ENCODE measurements at regions of chr19 and their contacts with region 1.

Region 1: GRCh38 chr19:43668406-43669158 is 1.4 kb downstream of the PLAUR start:
- H3K4me3 ChIP-seq: peak overlapping the region; percentile 19
- H3K27ac ChIP-seq: peak overlapping the region; percentile 56
- H3K4me1 ChIP-seq: peaks cover 42% of the 10 kb centered on the region
- CTCF ChIP-seq: no peak

Region 2: DNA sequence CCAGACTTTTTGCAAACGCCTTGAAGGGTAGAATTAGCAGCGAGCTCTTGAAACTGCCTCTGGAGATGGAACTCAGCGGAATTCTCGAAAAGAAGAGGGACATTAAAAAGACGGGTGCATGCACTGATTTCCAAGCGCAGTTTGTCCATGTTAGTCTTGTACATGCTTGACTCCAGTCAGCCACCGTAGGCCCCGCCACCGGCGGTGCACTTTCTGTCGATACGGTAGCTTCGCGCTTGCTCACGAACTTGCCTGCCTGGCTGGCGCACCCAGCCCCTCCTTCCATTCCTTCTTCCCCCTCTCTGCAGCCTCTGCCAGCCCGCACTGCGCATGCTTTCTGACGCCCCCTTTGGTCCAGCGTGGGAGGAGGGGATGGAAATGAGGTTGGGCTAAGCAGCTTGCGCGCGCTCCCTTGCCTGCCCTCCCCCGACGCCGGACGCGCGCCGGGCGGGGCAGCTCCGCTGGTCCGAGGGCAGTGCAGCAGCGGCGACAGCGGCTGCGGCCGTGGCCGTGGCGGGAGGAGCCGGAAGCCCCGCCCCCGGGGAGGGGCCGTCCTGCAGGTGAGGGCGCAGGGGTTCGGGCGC is 135.5 kb before region 1 on chr19 and contains the start of gene ZNF575:
- CTCF ChIA-PET with region 1: interaction called, 5 read pairs
- POLR2A ChIA-PET with region 1: interaction called, 25 read pairs
- H3K4me3 ChIP-seq: peak within 1 kb of the TSS; percentile 9
- H3K27ac ChIP-seq: peak within 1 kb of the TSS; percentile 73
- H3K4me1 ChIP-seq: peaks cover 26% of the 10 kb centered on the region
- CTCF ChIP-seq: no peak; the same call in 1 of the 2 replicates

Region 3: DNA sequence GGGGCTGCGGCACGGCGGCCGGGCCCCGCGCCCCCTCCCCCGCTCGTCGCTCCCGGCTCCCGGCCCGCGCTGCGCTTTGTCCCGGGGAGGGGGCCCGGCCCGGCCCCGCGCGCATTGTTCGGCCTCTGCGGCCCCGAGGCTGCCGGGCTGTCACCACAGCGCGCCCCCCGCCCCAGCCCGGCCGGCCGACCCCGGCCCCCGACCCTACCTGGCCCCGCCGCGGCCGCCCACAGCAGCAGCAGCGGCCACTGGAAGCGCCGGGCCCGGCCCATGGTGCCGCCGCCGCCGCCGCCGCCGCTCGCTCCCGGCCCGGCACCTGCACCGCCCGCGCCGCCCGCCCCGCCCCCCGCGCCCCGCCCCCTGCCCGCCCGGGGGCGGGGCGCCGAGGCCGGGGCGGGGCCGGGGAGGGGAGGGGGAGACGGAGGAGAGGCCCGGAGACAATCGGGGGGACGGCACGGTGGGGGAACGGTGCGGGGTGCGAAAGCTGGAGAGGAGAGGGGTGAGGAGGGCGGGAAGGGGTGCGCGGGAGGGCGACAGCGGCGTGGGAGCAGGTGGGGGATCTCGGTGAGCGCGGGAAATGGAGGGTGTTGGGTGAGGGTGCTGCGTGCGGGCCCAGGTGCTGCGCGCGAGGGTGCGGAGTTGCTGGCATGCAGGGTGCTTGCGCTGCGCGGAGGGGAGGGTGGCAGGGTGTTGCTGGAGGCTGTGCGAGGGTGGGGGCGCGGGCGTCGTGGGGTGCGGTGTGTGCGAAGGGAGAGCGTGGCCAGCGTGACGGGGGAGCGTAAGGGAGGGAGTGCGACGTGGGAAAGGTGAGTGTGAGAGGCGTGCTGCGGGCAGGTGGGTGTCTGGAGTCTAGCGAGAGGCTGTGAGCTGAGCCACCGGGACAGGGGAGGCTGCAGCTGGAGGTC is 28.8 kb before region 1 on chr19 and contains the start of gene CADM4:
- CTCF ChIA-PET with region 1: interaction called, 3 read pairs
- POLR2A ChIA-PET with region 1: interaction called, 13 read pairs
- H3K4me3 ChIP-seq: peak within 1 kb of the TSS; percentile 48
- H3K27ac ChIP-seq: peak within 1 kb of the TSS; percentile 49; the same call in 1 of the 2 replicates
- H3K4me1 ChIP-seq: peaks cover 21% of the 10 kb centered on the region
- CTCF ChIP-seq: peak; percentile 61

Region 4: DNA sequence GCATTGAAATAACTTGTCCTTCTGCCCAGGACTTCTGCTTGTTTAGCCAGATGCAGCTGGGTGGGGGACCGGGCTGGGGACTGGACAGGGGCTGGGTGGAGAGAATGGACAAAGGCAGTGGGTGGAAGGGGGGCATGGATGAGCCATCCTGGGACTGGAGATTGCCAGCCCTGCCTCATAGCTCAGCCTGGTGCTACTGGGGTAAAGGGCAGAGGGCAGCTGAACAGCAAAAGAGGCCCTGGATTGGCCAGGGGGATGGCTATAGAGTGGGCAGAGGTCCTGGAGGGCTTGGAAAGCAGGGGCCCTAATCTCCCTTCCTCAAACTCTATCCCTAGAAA is 19.0 kb after region 1 on chr19:
- CTCF ChIA-PET with region 1: interaction called, 14 read pairs
- POLR2A ChIA-PET with region 1: interaction called, 64 read pairs
- H3K4me3 ChIP-seq: no peak overlapping the region
- H3K27ac ChIP-seq: peak overlapping the region; percentile 45; the same call in 1 of the 2 replicates
- H3K4me1 ChIP-seq: peaks cover 13% of the 10 kb centered on the region
- CTCF ChIP-seq: no peak

Region 5: GRCh38 chr19:43747557-43748204 is 79.1 kb after region 1 on chr19:
- CTCF ChIA-PET with region 1: interaction called, 10 read pairs
- POLR2A ChIA-PET with region 1: interaction called, 63 read pairs
- H3K4me3 ChIP-seq: no peak overlapping the region
- H3K27ac ChIP-seq: 0 out of 2 replicates have a peak overlapping the region, but pooled peaks have one; percentile 17
- H3K4me1 ChIP-seq: no peaks in the 10 kb centered on the region; the same call in 1 of the 2 replicates
- CTCF ChIP-seq: no peak

Region 6: DNA sequence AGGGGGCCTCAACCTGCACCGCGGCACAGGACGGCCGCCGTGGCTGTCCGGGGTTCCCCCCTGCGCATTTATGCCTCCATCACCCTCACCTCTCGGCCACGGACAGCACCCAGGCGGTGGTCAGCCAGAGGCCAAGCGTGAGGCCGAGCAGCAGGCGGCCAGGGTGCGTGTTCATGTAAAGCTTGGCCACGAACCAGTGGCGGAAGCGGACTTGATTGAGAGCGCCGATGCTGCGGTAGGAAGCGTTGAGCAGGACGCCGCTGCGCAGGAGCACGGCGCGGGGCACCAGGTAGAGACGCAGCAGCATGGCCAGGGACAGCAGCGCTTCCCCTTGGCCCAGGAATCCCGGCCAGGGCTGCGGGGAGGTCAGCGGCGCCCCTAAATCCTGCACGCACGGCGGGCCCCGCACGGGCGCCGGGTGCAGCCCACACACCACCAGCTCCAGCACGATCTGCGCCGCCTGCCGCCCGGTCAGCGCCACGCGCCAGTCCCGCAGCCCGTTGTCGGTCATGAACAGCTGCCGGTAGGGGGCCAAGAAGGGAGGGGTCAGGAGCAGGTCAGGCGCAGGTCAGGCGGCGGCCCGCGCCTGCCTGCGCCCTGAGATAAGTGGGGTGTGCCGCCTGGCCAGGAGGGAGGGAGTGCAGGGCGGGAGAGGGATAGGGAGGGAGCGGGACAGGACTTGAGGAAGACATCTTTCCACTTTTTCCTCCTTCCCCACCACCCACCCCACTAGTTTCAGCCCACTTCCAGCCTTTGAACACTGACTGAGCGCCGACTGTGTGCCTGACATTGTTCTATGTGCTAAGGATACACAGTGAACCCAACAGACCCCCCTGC is 105.7 kb after region 1 on chr19:
- CTCF ChIA-PET with region 1: interaction called, 11 read pairs
- POLR2A ChIA-PET with region 1: interaction called, 5 read pairs
- H3K4me3 ChIP-seq: no peak overlapping the region
- H3K27ac ChIP-seq: no peak overlapping the region
- H3K4me1 ChIP-seq: peaks cover 10% of the 10 kb centered on the region; the same call in 1 of the 2 replicates
- CTCF ChIP-seq: peak; percentile 80

Measured in HEK293 (cell line).